ENCODE measurements at regions of chr20 and their contacts with region 1.

Region 1: GRCh38 chr20:16806886-16807285 is 58.7 kb downstream of the OTOR start:
- DNase-seq: no peak
- H3K4me3 ChIP-seq: no peak overlapping the region
- CTCF ChIP-seq: no peak
- POLR2A ChIP-seq: no peak

Region 2: GRCh38 chr20:15842872-15843271 is 964.0 kb before region 1 on chr20:
- intact Hi-C with region 1: no loop called
- DNase-seq: no peak
- H3K4me3 ChIP-seq: no peak overlapping the region
- CTCF ChIP-seq: no peak
- POLR2A ChIP-seq: no peak

Region 3: GRCh38 chr20:17431621-17432364 is 624.9 kb after region 1 on chr20:
- intact Hi-C with region 1: loop called (anchors 5 kb)
- DNase-seq: peak; percentile 34 to 86
- H3K4me3 ChIP-seq: no peak overlapping the region
- CTCF ChIP-seq: peak in 1 of 3 donors; percentile 25
- POLR2A ChIP-seq: no peak

Measured in lower leg skin (tissue), 4 donors.